Calu3 (cell line): ENCODE measurements at regions of chr2 and their contacts with region 1.

Region 1: GRCh38 chr2:85750587-85751575 is 2.9 kb upstream of the ATOH8 start:
- DNase-seq: peak; percentile 85
- H3K4me3 Mint-ChIP-seq: no peak overlapping the region
- H3K27ac Mint-ChIP-seq: no peak overlapping the region
- H3K4me1 Mint-ChIP-seq: peaks cover 15% of the 10 kb centered on the region
- H3K27me3 Mint-ChIP-seq: peaks cover 70% of the 10 kb centered on the region
- CTCF ChIP-seq: peak; percentile 73

Region 2: GRCh38 chr2:85813982-85814801 is 63.3 kb after region 1 on chr2:
- CTCF ChIA-PET with region 1: interaction called, 16 read pairs
- intact Hi-C with region 1: loop called (anchors 1 kb)
- DNase-seq: peak; percentile 95
- H3K4me3 Mint-ChIP-seq: no peak overlapping the region
- H3K27ac Mint-ChIP-seq: no peak overlapping the region
- H3K4me1 Mint-ChIP-seq: no peaks in the 10 kb centered on the region
- H3K27me3 Mint-ChIP-seq: peaks cover 19% of the 10 kb centered on the region
- CTCF ChIP-seq: peak; percentile 91

Region 3: DNA sequence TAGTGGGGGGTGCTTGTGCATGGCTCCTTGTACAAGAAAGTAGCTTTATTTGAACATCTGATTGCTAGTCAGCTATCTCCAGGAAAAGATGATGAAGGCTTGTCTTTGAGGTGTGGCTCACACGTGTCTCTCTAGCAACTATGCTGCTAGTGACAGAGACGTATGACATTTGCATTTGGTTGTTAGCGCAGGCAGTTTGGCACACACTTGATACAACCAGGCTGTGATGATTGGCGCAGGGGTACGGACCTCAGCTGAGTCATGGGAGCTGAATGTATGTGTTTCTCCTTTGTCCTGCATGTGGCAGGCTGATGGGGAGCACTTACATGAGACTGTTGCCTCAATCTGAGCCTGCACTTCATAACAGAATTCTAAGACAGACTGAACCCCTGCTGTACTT is 384.8 kb after region 1 on chr2:
- CTCF ChIA-PET with region 1: no interaction called
- intact Hi-C with region 1: no loop called
- DNase-seq: no peak
- H3K4me3 Mint-ChIP-seq: no peak overlapping the region
- H3K27ac Mint-ChIP-seq: no peak overlapping the region
- H3K4me1 Mint-ChIP-seq: no peaks in the 10 kb centered on the region
- H3K27me3 Mint-ChIP-seq: no peaks in the 10 kb centered on the region
- CTCF ChIP-seq: no peak